ENCODE measurements at regions of chr6 and their contacts with region 1.

Region 1: GRCh38 chr6:90080876-90081481 is 186.7 kb downstream of the GJA10 start:
- DNase-seq: peak; percentile 94
- H3K4me3 Mint-ChIP-seq: peak overlapping the region; percentile 86
- H3K27ac Mint-ChIP-seq: peak overlapping the region; percentile 92
- H3K4me1 Mint-ChIP-seq: peaks cover 91% of the 10 kb centered on the region
- H3K27me3 Mint-ChIP-seq: no peaks in the 10 kb centered on the region

Region 2: GRCh38 chr6:90000864-90001731 is 79.9 kb before region 1 on chr6:
- CTCF ChIA-PET with region 1: no interaction called
- POLR2A ChIA-PET with region 1: interaction called, 3 read pairs
- intact Hi-C with region 1: loop called (anchors 1 kb)
- DNase-seq: peak; percentile 76
- H3K4me3 Mint-ChIP-seq: no peak overlapping the region
- H3K27ac Mint-ChIP-seq: no peak overlapping the region
- H3K4me1 Mint-ChIP-seq: peaks cover 19% of the 10 kb centered on the region
- H3K27me3 Mint-ChIP-seq: no peaks in the 10 kb centered on the region

Region 3: DNA sequence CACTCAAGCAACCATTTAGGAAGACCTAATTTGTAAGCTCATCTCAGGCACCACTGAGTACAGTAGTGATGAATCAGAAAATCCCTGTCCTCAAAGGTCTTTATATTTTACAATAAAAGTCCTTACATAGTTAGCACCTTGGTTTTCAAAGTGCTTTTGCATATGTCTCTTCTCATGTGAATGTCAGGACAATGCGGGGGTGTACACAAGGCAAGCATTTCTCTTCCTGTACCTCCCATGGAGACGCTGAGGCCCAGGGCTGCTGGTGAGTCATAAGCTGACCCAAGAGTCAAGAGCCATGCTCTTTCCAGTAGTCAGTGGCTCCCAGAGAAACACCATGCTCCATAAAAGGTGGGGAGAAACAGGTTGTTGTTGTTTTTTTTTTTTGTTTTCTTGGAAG is 12.7 kb before region 1 on chr6:
- CTCF ChIA-PET with region 1: no interaction called
- POLR2A ChIA-PET with region 1: no interaction called
- intact Hi-C with region 1: loop called (anchors 1 kb)
- DNase-seq: peak; percentile 64
- H3K4me3 Mint-ChIP-seq: no peak overlapping the region
- H3K27ac Mint-ChIP-seq: peak overlapping the region; percentile 6
- H3K4me1 Mint-ChIP-seq: peaks cover 86% of the 10 kb centered on the region
- H3K27me3 Mint-ChIP-seq: no peaks in the 10 kb centered on the region

Region 4: GRCh38 chr6:90170601-90171000 is 89.6 kb after region 1 on chr6:
- CTCF ChIA-PET with region 1: no interaction called
- POLR2A ChIA-PET with region 1: no interaction called
- intact Hi-C with region 1: no loop called
- DNase-seq: no peak
- H3K4me3 Mint-ChIP-seq: no peak overlapping the region
- H3K27ac Mint-ChIP-seq: no peak overlapping the region
- H3K4me1 Mint-ChIP-seq: peaks cover 42% of the 10 kb centered on the region
- H3K27me3 Mint-ChIP-seq: no peaks in the 10 kb centered on the region

Region 5: GRCh38 chr6:90230548-90231215 is 149.7 kb after region 1 on chr6:
- CTCF ChIA-PET with region 1: no interaction called
- POLR2A ChIA-PET with region 1: no interaction called
- intact Hi-C with region 1: loop called (anchors 1 kb)
- DNase-seq: no peak
- H3K4me3 Mint-ChIP-seq: no peak overlapping the region
- H3K27ac Mint-ChIP-seq: no peak overlapping the region
- H3K4me1 Mint-ChIP-seq: peaks cover 88% of the 10 kb centered on the region
- H3K27me3 Mint-ChIP-seq: no peaks in the 10 kb centered on the region

Region 6: GRCh38 chr6:90413867-90414266 is 332.9 kb after region 1 on chr6:
- CTCF ChIA-PET with region 1: no interaction called
- POLR2A ChIA-PET with region 1: no interaction called
- intact Hi-C with region 1: loop called (anchors 1 kb)
- DNase-seq: peak; percentile 92
- H3K4me3 Mint-ChIP-seq: peak overlapping the region; percentile 64
- H3K27ac Mint-ChIP-seq: peak overlapping the region; percentile 93
- H3K4me1 Mint-ChIP-seq: peaks cover 71% of the 10 kb centered on the region
- H3K27me3 Mint-ChIP-seq: no peaks in the 10 kb centered on the region

Region 7: GRCh38 chr6:90545448-90545847 is 464.5 kb after region 1 on chr6:
- CTCF ChIA-PET with region 1: no interaction called
- POLR2A ChIA-PET with region 1: no interaction called
- intact Hi-C with region 1: no loop called
- DNase-seq: no peak
- H3K4me3 Mint-ChIP-seq: no peak overlapping the region
- H3K27ac Mint-ChIP-seq: no peak overlapping the region
- H3K4me1 Mint-ChIP-seq: no peaks in the 10 kb centered on the region
- H3K27me3 Mint-ChIP-seq: no peaks in the 10 kb centered on the region

Region 8: GRCh38 chr6:90586836-90587638 is 506.1 kb after region 1 on chr6 and contains the start of gene MAP3K7:
- CTCF ChIA-PET with region 1: no interaction called
- POLR2A ChIA-PET with region 1: no interaction called
- intact Hi-C with region 1: loop called (anchors 10 kb)
- DNase-seq: peak; percentile 97
- H3K4me3 Mint-ChIP-seq: peak within 1 kb of the TSS; percentile 98
- H3K27ac Mint-ChIP-seq: peak within 1 kb of the TSS; percentile 99
- H3K4me1 Mint-ChIP-seq: peaks cover 38% of the 10 kb centered on the region
- H3K27me3 Mint-ChIP-seq: peaks cover 6% of the 10 kb centered on the region
- total RNA-seq, gene MAP3K7: 26.3 to 28.7 TPM

Region 9: GRCh38 chr6:91796603-91797002 is 1715.6 kb after region 1 on chr6:
- CTCF ChIA-PET with region 1: no interaction called
- POLR2A ChIA-PET with region 1: no interaction called
- intact Hi-C with region 1: no loop called
- DNase-seq: no peak
- H3K4me3 Mint-ChIP-seq: no peak overlapping the region
- H3K27ac Mint-ChIP-seq: no peak overlapping the region
- H3K4me1 Mint-ChIP-seq: no peaks in the 10 kb centered on the region
- H3K27me3 Mint-ChIP-seq: no peaks in the 10 kb centered on the region

Measured in activated CD4-positive, alpha-beta memory T cell treated with anti-CD3 and anti-CD28 coated beads for 36 hours (primary cell).